ENCODE measurements at regions of chr12 and their contacts with region 1.

Region 1: GRCh38 chr12:20063116-20063515 is 305.2 kb upstream of the PDE3A start:
- DNase-seq: no peak

Region 2: DNA sequence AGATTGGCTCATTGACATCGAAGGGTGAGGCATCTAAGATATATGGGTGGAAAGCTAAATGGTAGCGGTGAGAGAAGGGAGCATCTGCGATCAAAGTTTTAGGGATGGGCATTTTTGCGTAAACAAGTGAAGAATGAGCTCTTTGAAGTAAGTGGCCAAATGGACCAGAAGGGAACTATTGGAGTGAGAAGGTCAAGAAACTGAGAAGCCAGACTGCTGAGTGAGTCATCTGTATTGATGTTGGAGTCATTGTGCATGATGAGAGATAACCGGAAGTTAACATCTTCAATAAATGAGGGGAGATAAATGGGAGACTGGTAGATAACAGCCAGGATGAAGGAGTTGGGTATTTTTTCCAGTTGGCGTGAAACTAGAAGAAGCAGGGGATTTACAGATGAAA is 33.3 kb after region 1 on chr12:
- intact Hi-C with region 1: loop called in 1 of 2 experiments (anchors 2 kb)
- DNase-seq: no peak

Measured in posterior vena cava (tissue), 2 donors.